Activated B cell treated with CpG ODN at 0.5 μM for 24 hours (primary cell): ENCODE measurements at regions of chr3 and their contacts with region 1.

Region 1: GRCh38 chr3:57837686-57838085 is 81.6 kb downstream of the SLMAP start:
- DNase-seq: no peak
- ATAC-seq: no peak
- H3K4me3 Mint-ChIP-seq: no peak overlapping the region
- H3K27ac Mint-ChIP-seq: no peak overlapping the region
- H3K4me1 Mint-ChIP-seq: peaks cover 6% of the 10 kb centered on the region
- H3K27me3 Mint-ChIP-seq: no peaks in the 10 kb centered on the region
- CTCF ChIP-seq: no peak

Region 2: GRCh38 chr3:56629047-56629446 is 1208.6 kb before region 1 on chr3:
- CTCF ChIA-PET with region 1: no interaction called
- POLR2A ChIA-PET with region 1: interaction called, 10 read pairs
- intact Hi-C with region 1: no loop called
- DNase-seq: no peak
- ATAC-seq: no peak
- H3K4me3 Mint-ChIP-seq: no peak overlapping the region
- H3K27ac Mint-ChIP-seq: no peak overlapping the region
- H3K4me1 Mint-ChIP-seq: no peaks in the 10 kb centered on the region
- H3K27me3 Mint-ChIP-seq: no peaks in the 10 kb centered on the region
- CTCF ChIP-seq: no peak

Region 3: DNA sequence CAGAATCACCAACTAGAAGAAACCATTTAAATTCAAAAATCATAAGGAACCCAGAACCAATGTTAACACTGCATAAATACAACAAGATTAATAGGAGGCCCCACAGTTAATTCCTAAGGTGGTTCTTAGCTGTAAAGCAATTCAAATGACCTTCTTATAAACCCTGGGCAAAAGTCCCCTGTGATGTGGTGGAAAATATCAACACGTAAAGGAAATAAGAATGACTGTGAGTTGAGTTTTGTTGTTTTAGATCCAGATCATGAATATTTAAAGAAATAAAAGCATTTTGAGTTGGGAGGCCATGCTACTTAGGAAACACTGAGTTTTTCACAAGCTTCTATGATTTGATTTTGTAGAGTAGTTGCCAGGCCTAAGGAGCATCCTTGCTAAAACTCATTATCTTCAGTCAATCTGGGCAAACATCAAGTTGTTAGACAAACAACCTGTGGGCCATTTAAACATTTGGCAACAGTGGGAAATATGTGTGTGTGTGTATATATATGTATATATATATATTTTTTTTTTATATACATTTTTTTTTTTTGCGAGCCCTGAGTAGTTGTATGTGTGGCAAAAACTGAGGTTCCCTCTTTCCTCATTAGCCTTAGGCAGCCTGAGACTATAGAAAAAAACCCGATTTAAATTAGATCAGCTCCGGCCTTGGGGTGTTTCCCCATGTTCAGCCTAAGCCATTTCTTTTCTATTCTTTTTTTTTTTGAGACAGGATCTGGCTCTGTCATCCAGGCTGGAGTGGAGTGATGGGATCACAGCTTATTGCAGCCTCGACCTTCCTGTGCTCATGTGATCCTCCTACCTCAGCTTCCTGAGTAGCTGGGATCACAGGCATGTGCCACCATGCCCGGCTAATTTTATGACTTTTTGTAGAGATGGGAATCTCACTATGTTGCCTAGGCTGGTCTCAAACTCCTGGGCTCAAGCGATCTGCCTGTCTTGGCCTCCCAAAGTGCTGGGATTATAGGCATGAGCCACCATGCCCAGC is 487.0 kb after region 1 on chr3:
- CTCF ChIA-PET with region 1: no interaction called
- POLR2A ChIA-PET with region 1: no interaction called
- intact Hi-C with region 1: no loop called
- DNase-seq: no peak
- ATAC-seq: peak; percentile 47
- H3K4me3 Mint-ChIP-seq: peak overlapping the region; percentile 48
- H3K27ac Mint-ChIP-seq: peak overlapping the region; percentile 73
- H3K4me1 Mint-ChIP-seq: peaks cover 38% of the 10 kb centered on the region
- H3K27me3 Mint-ChIP-seq: no peaks in the 10 kb centered on the region
- CTCF ChIP-seq: no peak